Transverse colon (tissue), 4 donors: ENCODE measurements at regions of chr5 and their contacts with region 1.

Region 1: DNA sequence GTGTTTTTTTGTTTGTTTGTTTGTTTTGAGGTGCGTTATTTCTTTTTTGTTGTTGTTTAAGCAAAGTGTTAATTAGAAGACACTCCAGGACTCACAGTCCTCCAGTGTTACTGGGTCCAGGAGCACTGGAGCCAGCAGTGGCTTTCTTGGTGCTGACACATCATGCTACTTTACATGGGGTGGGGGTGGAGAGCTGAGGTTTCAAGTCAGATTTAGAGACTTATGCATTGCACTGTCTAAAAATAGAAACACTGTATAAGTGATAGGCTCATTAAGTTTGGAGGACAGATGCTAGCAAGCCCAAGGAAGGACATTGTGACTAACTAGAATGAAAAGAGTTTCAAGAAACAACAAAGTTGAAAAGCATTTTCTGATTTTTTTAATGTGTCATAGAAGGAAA is 2209.2 kb downstream of the MAT2B start:
- DNase-seq: no peak
- H3K4me3 ChIP-seq: no peak overlapping the region
- H3K27ac ChIP-seq: no peak overlapping the region
- H3K4me1 ChIP-seq: no peaks in the 10 kb centered on the region
- H3K27me3 ChIP-seq: no peaks in the 10 kb centered on the region
- CTCF ChIP-seq: no peak
- EP300 ChIP-seq: no peak
- POLR2A ChIP-seq: no peak

Region 2: DNA sequence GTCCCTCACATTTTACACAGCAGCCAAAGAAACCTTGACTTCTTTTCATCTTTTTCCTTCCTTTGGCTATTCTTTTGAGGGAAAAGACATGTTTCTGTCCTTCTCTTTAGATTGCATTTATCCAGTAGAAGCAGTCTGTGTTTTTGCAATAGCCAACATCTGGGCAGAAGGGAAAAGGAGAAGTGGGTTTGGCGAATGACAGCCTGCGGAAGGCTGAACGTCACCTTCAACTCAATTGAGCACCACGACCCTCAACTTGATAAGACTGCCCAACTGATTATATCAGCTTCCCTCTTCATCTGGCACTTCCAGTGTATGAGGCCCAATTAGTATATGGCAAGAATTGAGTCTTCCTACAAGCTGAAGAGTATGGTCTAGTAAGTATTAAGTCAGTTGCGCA is 579.3 kb after region 1 on chr5:
- in situ Hi-C with region 1: no loop called
- intact Hi-C with region 1: loop called (anchors 10 kb)
- DNase-seq: no peak
- H3K4me3 ChIP-seq: no peak overlapping the region
- H3K27ac ChIP-seq: no peak overlapping the region
- H3K4me1 ChIP-seq: no peaks in the 10 kb centered on the region
- H3K27me3 ChIP-seq: no peaks in the 10 kb centered on the region
- CTCF ChIP-seq: no peak
- EP300 ChIP-seq: no peak
- POLR2A ChIP-seq: no peak